Natural killer cell (primary cell): ENCODE measurements at regions of chr11 and their contacts with region 1.

Region 1: GRCh38 chr11:115806056-115806455 is 301.8 kb upstream of the CADM1 start:
- DNase-seq: no peak
- ATAC-seq: no peak
- H3K4me3 ChIP-seq: no peak overlapping the region
- H3K4me3 Mint-ChIP-seq: no peak overlapping the region
- H3K27ac ChIP-seq: no peak overlapping the region
- H3K27ac Mint-ChIP-seq: no peak overlapping the region
- H3K4me1 ChIP-seq: no peaks in the 10 kb centered on the region
- H3K4me1 Mint-ChIP-seq: no peaks in the 10 kb centered on the region
- H3K27me3 ChIP-seq: no peaks in the 10 kb centered on the region
- H3K27me3 Mint-ChIP-seq: no peaks in the 10 kb centered on the region
- CTCF ChIP-seq: no peak

Region 2: DNA sequence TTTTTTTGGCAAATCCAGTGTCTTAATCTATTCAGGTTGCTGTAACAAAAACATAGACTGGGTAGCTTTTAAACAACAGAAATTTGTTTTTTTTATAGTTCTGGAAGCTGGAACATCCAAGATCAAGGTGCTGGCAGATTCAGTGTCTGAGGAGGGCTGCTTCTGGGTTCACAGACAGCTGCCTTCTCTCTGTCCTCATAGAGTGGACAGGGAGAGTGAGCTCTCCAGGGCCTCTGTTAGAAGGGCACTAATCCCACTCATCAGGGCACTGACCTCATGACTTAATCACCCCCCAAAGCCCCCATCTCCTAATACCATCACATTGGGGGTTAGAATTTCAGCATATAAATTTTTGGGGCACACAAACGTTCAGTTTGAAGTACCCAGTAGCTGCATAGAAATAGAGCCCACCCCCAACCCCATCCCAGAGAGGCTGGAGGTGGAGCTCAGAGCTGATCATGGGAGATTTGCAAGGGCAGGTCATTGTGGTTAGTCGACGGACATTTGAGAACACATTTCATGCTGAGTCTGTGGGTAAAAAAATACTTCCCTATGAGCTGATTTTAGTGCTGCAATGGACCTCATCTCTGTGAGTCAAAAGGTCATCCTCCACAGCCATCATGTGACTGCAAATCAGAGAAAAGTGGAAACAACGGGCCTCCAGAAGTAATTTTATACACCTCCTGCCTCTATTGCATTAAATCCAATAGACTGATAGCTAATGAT is 98.7 kb before region 1 on chr11:
- intact Hi-C with region 1: no loop called
- DNase-seq: peak in 1 of 2 donors; percentile 3
- ATAC-seq: peak in 2 of 3 donors; percentile 24 to 72
- H3K4me3 ChIP-seq: no peak overlapping the region
- H3K4me3 Mint-ChIP-seq: no peak overlapping the region
- H3K27ac ChIP-seq: no peak overlapping the region
- H3K27ac Mint-ChIP-seq: no peak overlapping the region
- H3K4me1 ChIP-seq: peaks cover 16% of the 10 kb centered on the region
- H3K4me1 Mint-ChIP-seq: peaks cover 0 to 6% of the 10 kb centered on the region in 2 donors
- H3K27me3 ChIP-seq: no peaks in the 10 kb centered on the region
- H3K27me3 Mint-ChIP-seq: peaks cover 0 to 4% of the 10 kb centered on the region in 2 donors
- CTCF ChIP-seq: no peak

Region 3: GRCh38 chr11:115845872-115846271 is 39.8 kb after region 1 on chr11:
- intact Hi-C with region 1: loop called (anchors 2 kb)
- DNase-seq: no peak
- ATAC-seq: no peak
- H3K4me3 ChIP-seq: no peak overlapping the region
- H3K4me3 Mint-ChIP-seq: no peak overlapping the region
- H3K27ac ChIP-seq: no peak overlapping the region
- H3K27ac Mint-ChIP-seq: no peak overlapping the region
- H3K4me1 ChIP-seq: no peaks in the 10 kb centered on the region
- H3K4me1 Mint-ChIP-seq: no peaks in the 10 kb centered on the region
- H3K27me3 ChIP-seq: no peaks in the 10 kb centered on the region
- H3K27me3 Mint-ChIP-seq: peaks cover 0 to 3% of the 10 kb centered on the region in 2 donors
- CTCF ChIP-seq: no peak

Region 4: GRCh38 chr11:116130122-116130521 is 324.1 kb after region 1 on chr11:
- intact Hi-C with region 1: no loop called
- DNase-seq: no peak
- ATAC-seq: no peak
- H3K4me3 ChIP-seq: no peak overlapping the region
- H3K4me3 Mint-ChIP-seq: no peak overlapping the region
- H3K27ac ChIP-seq: no peak overlapping the region
- H3K27ac Mint-ChIP-seq: no peak overlapping the region
- H3K4me1 ChIP-seq: no peaks in the 10 kb centered on the region
- H3K4me1 Mint-ChIP-seq: no peaks in the 10 kb centered on the region
- H3K27me3 ChIP-seq: no peaks in the 10 kb centered on the region
- H3K27me3 Mint-ChIP-seq: peaks cover 0 to 10% of the 10 kb centered on the region in 2 donors
- CTCF ChIP-seq: no peak